ENCODE measurements at regions of chr2 and their contacts with region 1.

Region 1: GRCh38 chr2:191836853-191837769 is 9.8 kb downstream of the CAVIN2 start:
- DNase-seq: no peak
- H3K4me3 ChIP-seq: no peak overlapping the region
- H3K27ac ChIP-seq: peak overlapping the region in 1 of 4 donors; percentile 2
- H3K4me1 ChIP-seq: peaks cover 0 to 9% (median 0%) of the 10 kb centered on the region in 4 donors
- H3K27me3 ChIP-seq: no peaks in the 10 kb centered on the region
- CTCF ChIP-seq: no peak
- EP300 ChIP-seq: no peak
- POLR2A ChIP-seq: no peak

Region 2: DNA sequence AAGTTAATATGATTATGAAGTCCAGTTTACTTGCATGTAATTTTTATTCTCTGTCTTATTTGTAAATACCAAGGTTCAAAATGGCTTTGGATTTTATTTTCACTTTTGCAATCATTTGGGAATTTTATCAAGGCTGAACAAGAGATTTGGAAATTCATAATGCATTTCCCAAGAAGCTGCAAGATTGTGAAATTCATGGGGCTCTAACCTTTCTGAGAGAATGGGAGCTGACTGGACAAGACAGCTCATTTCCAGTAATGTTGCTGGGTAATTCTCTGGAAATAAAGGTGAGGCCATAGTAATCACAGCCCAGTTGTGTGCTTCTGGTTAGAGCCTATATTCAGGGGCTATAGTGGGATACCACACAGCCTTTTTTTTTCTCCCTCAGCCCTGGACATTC is 180.7 kb before region 1 on chr2:
- in situ Hi-C with region 1: no loop called
- intact Hi-C with region 1: no loop called
- DNase-seq: no peak
- H3K4me3 ChIP-seq: no peak overlapping the region
- H3K27ac ChIP-seq: no peak overlapping the region
- H3K4me1 ChIP-seq: no peaks in the 10 kb centered on the region
- H3K27me3 ChIP-seq: no peaks in the 10 kb centered on the region
- CTCF ChIP-seq: no peak
- EP300 ChIP-seq: no peak
- POLR2A ChIP-seq: no peak

Region 3: GRCh38 chr2:191759680-191760079 is 77.4 kb before region 1 on chr2:
- in situ Hi-C with region 1: no loop called
- intact Hi-C with region 1: loop called (anchors 2 kb)
- DNase-seq: no peak
- H3K4me3 ChIP-seq: no peak overlapping the region
- H3K27ac ChIP-seq: no peak overlapping the region
- H3K4me1 ChIP-seq: no peaks in the 10 kb centered on the region
- H3K27me3 ChIP-seq: no peaks in the 10 kb centered on the region
- CTCF ChIP-seq: no peak
- EP300 ChIP-seq: no peak
- POLR2A ChIP-seq: no peak

Measured in transverse colon (tissue), 4 donors.